ENCODE measurements at regions of chr14 and their contacts with region 1.

Region 1: GRCh38 chr14:29035134-29035533 is 268.5 kb downstream of the FOXG1 start:
- DNase-seq: no peak
- ATAC-seq: no peak

Region 2: DNA sequence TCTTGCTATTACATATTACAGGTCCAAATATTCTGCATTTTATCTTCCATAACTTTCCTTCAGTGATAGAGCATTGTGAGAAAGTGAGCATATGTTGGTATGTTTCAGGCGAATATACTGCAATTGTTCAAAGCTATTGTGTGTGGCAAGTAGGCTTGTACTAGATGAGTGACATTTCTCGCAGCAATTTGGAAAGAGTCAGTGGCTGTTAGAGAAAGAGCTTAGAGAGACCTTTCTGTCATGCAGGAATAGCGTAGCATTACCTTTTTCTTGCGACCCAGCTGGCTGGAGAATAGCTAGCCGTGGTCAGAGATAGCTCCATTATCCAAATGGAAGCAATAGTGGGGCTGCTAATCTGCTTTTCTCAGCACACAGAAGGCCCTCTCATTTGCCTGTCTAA is 947.0 kb before region 1 on chr14:
- intact Hi-C with region 1: no loop called
- DNase-seq: no peak
- ATAC-seq: no peak

Region 3: GRCh38 chr14:28952666-28953065 is 82.5 kb before region 1 on chr14:
- intact Hi-C with region 1: no loop called
- DNase-seq: no peak
- ATAC-seq: no peak

Region 4: DNA sequence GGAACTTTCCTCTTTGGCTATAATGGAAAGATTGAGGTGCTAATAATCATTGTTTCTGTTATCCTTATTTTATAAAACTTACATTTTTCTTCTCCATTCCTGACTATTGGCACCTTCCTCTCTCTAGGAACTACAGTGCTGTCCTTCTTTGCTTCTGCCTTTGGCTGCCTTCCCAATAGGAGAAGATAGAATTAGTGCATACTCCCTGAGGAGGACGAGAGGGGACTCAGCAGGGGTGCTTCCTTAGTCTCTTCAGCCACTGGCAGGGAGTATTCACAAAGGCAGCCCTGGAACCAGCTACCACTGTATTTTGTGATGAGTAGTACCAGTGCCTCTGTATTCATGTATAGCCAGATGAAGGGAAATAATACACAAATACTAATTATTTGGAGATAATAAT is 60.0 kb before region 1 on chr14:
- intact Hi-C with region 1: loop called (anchors 2 kb)
- DNase-seq: no peak
- ATAC-seq: no peak